Breast epithelium (tissue), 4 donors: ENCODE measurements at regions of chr18 and their contacts with region 1.

Region 1: GRCh38 chr18:23856466-23857163 is 157.9 kb upstream of the TTC39C start:
- DNase-seq: no peak
- H3K4me3 ChIP-seq: no peak overlapping the region
- H3K27ac ChIP-seq: no peak overlapping the region
- H3K4me1 ChIP-seq: no peaks in the 10 kb centered on the region
- H3K27me3 ChIP-seq: no peaks in the 10 kb centered on the region
- CTCF ChIP-seq: no peak
- POLR2A ChIP-seq: no peak

Region 2: GRCh38 chr18:23452728-23453679 is 403.6 kb before region 1 on chr18 and contains the start of gene RIOK3:
- intact Hi-C with region 1: no loop called
- DNase-seq: peak; percentile 97 to 99
- H3K4me3 ChIP-seq: peak within 1 kb of the TSS; percentile 72 to 89 (median 74)
- H3K27ac ChIP-seq: peak within 1 kb of the TSS; percentile 93 to 98
- H3K4me1 ChIP-seq: peaks cover 0 to 6% of the 10 kb centered on the region in 2 donors
- H3K27me3 ChIP-seq: no peaks in the 10 kb centered on the region
- CTCF ChIP-seq: peak in 2 of 3 donors; percentile 10 to 22
- POLR2A ChIP-seq: peak; percentile 93
- total RNA-seq, gene RIOK3: 61.6 to 80.8 (median 74.3) TPM

Region 3: GRCh38 chr18:23710068-23710527 is 146.5 kb before region 1 on chr18:
- intact Hi-C with region 1: no loop called
- DNase-seq: no peak
- H3K4me3 ChIP-seq: no peak overlapping the region
- H3K27ac ChIP-seq: no peak overlapping the region
- H3K4me1 ChIP-seq: no peaks in the 10 kb centered on the region
- H3K27me3 ChIP-seq: no peaks in the 10 kb centered on the region
- CTCF ChIP-seq: no peak
- POLR2A ChIP-seq: no peak

Region 4: GRCh38 chr18:23825978-23826405 is 30.6 kb before region 1 on chr18:
- intact Hi-C with region 1: loop called (anchors 1 kb)
- DNase-seq: peak in 1 of 2 donors; percentile 87
- H3K4me3 ChIP-seq: no peak overlapping the region
- H3K27ac ChIP-seq: peak overlapping the region; percentile 74 to 80
- H3K4me1 ChIP-seq: peaks cover 0 to 6% of the 10 kb centered on the region in 2 donors
- H3K27me3 ChIP-seq: no peaks in the 10 kb centered on the region
- CTCF ChIP-seq: no peak
- POLR2A ChIP-seq: no peak